ENCODE measurements at regions of chr5 and their contacts with region 1.

Region 1: DNA sequence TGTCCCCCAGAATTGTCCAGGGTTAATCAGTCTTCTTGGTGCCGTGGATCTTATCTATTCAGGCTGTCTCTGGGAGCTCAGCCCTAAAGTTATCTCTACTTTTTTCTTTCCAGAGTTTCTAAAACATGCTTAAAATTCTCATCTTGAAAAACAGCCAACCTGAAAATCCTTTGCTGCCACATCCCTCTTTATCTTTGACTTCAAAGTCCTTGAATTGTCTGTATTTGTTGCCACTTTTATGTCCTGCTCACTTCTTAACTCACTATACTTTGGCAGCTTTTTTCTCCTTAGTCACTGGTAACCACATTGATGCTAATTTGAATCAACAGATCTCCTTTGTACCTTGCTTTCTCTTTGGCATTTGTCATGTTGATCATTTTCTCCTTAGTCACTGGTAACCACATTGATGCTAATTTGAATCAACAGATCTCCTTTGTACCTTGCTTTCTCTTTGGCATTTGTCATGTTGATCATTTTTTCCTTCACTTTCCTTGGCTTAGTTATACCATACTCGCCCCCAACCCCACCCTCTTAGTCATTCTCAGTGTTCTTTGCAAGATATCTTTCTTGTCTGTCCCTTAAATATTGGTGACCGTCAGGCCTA is 8.5 kb downstream of the DMXL1 start:
- DNase-seq: peak; percentile 77
- H3K4me3 Mint-ChIP-seq: peak overlapping the region; percentile 65
- H3K27ac Mint-ChIP-seq: peak overlapping the region; percentile 86
- H3K4me1 Mint-ChIP-seq: peaks cover 33% of the 10 kb centered on the region
- H3K27me3 Mint-ChIP-seq: no peaks in the 10 kb centered on the region

Region 2: GRCh38 chr5:119063579-119064379 is 15.6 kb before region 1 on chr5:
- intact Hi-C with region 1: loop called (anchors 1 kb)
- DNase-seq: no peak
- H3K4me3 Mint-ChIP-seq: peak overlapping the region; percentile 4
- H3K27ac Mint-ChIP-seq: peak overlapping the region; percentile 62
- H3K4me1 Mint-ChIP-seq: peaks cover 13% of the 10 kb centered on the region
- H3K27me3 Mint-ChIP-seq: peaks cover 2% of the 10 kb centered on the region

Region 3: DNA sequence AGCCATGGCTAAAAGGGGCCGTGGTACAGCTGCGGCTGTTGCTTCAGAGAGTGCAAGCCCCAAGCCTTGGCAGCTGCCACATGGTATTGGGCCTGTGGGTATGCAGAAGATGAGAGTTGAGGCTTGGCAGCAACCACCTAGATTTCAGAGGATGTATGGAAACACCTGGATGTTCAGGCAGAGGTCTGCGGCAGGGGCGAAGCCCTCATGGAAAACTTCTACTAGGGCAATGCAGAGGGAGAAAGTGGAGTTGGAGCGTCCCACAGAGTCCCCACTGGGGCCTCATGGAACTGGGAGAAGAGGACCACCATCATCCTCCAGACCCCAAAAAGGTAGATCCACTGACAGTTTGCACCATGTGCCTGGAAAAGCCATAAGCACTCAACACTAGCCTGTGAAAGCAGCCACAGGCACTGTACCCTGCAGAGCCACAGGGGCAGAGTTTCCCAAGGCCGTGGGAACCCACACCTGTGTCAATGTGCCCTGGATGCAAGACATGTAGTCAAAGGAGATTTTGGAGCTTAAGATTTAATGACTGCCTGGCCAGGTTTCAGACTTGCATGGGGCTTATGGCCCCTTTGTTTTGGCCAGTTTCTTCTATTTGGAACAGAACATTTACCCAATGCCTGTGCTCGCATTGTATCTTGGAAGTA is 57.4 kb after region 1 on chr5:
- intact Hi-C with region 1: loop called (anchors 10 kb)
- DNase-seq: peak; percentile 45
- H3K4me3 Mint-ChIP-seq: no peak overlapping the region
- H3K27ac Mint-ChIP-seq: no peak overlapping the region
- H3K4me1 Mint-ChIP-seq: no peaks in the 10 kb centered on the region
- H3K27me3 Mint-ChIP-seq: no peaks in the 10 kb centered on the region

Region 4: GRCh38 chr5:119287547-119288073 is 208.2 kb after region 1 on chr5:
- intact Hi-C with region 1: loop called (anchors 1 kb)
- DNase-seq: peak; percentile 87
- H3K4me3 Mint-ChIP-seq: peak overlapping the region; percentile 78
- H3K27ac Mint-ChIP-seq: peak overlapping the region; percentile 93
- H3K4me1 Mint-ChIP-seq: peaks cover 89% of the 10 kb centered on the region
- H3K27me3 Mint-ChIP-seq: no peaks in the 10 kb centered on the region

Region 5: DNA sequence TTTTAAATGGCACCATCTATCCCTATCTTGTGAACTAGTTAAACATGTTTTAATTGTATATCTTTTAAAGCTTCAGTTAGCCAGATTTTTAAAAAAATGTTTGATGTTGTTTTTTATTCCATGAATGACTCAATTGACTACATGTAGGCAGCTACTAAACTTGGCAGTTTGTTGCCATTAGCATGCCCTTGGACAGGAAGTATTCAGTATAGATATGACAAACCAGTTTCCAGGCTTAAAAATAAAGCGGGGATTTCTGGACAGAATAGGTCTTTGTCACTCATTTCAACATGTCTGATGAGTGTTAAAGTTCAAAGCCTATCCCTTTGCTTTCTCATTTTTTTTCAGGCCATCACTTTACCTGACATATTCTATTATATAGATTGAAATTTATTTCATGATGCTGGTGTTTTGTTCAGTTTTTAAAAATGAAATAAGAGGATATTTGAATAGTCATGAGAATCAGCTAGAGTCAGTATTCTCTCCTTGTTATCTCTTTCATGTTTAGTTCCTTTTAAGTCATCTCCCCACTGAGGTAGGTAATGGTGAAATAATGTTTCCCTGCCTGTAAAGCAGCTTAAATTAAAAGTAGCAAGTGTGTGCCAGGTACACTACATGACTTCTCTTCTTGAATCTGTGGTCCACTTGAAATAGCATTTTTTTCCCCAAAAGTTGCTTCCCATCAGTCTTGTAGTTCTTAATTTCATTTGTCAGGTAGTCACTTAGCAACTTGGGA is 288.2 kb after region 1 on chr5:
- intact Hi-C with region 1: loop called (anchors 1 kb)
- DNase-seq: peak; percentile 75
- H3K4me3 Mint-ChIP-seq: peak overlapping the region; percentile 78
- H3K27ac Mint-ChIP-seq: peak overlapping the region; percentile 96
- H3K4me1 Mint-ChIP-seq: peaks cover 69% of the 10 kb centered on the region
- H3K27me3 Mint-ChIP-seq: no peaks in the 10 kb centered on the region

Region 6: GRCh38 chr5:119411935-119412602 is 332.6 kb after region 1 on chr5:
- intact Hi-C with region 1: loop called (anchors 1 kb)
- DNase-seq: peak; percentile 87
- H3K4me3 Mint-ChIP-seq: peak overlapping the region; percentile 85
- H3K27ac Mint-ChIP-seq: peak overlapping the region; percentile 70
- H3K4me1 Mint-ChIP-seq: peaks cover 32% of the 10 kb centered on the region
- H3K27me3 Mint-ChIP-seq: peaks cover 10% of the 10 kb centered on the region

Region 7: DNA sequence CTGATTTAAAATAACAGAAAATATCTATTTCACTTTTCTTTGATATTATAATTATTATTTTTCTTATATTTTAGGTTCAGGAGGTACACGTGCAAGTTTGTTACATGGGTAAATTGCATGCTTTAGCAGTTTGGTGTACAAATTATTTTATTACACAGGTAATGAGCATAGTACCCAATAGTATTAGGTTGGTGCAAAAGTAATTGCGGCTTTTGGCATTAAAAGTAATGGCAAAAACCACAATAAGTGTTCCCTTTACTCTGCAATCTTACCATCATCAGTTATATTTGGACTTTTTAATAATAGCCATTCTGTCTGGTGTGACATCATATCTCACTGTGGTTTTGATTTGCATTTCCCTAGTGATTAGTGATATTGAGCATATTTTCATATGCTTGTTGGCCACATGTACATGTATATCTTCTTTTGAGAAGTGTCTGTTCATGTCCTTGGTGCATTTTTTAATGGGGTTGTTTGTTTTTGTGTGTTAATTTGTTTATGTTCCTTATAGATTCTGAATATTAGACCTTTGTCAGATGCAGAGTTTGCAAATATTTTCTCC is 839.8 kb after region 1 on chr5:
- intact Hi-C with region 1: no loop called
- DNase-seq: no peak
- H3K4me3 Mint-ChIP-seq: no peak overlapping the region
- H3K27ac Mint-ChIP-seq: no peak overlapping the region
- H3K4me1 Mint-ChIP-seq: no peaks in the 10 kb centered on the region
- H3K27me3 Mint-ChIP-seq: no peaks in the 10 kb centered on the region

Measured in activated CD4-positive, alpha-beta T cell treated with anti-CD3 and anti-CD28 coated beads, Interleukin-2, amount 10 ng/mL, durations not matched to agents 24 days and 14 days (primary cell).